B cell (primary cell): ENCODE measurements at regions of chr7 and their contacts with region 1.

Region 1: GRCh38 chr7:3955751-3956696 is 655.0 kb downstream of the SDK1 start:
- DNase-seq: peak; percentile 61
- ATAC-seq: peak; percentile 89
- H3K4me3 ChIP-seq: no peak overlapping the region
- H3K4me3 Mint-ChIP-seq: peak overlapping the region; percentile 65
- H3K27ac ChIP-seq: no peak overlapping the region
- H3K27ac Mint-ChIP-seq: peak overlapping the region; percentile 44
- H3K4me1 ChIP-seq: peaks cover 4 to 38% of the 10 kb centered on the region in 2 donors
- H3K4me1 Mint-ChIP-seq: peaks cover 33% of the 10 kb centered on the region
- H3K27me3 ChIP-seq: peaks cover 0 to 3% (median 0%) of the 10 kb centered on the region in 4 experiments
- H3K27me3 Mint-ChIP-seq: peaks cover 14% of the 10 kb centered on the region
- CTCF ChIP-seq: no peak

Region 2: DNA sequence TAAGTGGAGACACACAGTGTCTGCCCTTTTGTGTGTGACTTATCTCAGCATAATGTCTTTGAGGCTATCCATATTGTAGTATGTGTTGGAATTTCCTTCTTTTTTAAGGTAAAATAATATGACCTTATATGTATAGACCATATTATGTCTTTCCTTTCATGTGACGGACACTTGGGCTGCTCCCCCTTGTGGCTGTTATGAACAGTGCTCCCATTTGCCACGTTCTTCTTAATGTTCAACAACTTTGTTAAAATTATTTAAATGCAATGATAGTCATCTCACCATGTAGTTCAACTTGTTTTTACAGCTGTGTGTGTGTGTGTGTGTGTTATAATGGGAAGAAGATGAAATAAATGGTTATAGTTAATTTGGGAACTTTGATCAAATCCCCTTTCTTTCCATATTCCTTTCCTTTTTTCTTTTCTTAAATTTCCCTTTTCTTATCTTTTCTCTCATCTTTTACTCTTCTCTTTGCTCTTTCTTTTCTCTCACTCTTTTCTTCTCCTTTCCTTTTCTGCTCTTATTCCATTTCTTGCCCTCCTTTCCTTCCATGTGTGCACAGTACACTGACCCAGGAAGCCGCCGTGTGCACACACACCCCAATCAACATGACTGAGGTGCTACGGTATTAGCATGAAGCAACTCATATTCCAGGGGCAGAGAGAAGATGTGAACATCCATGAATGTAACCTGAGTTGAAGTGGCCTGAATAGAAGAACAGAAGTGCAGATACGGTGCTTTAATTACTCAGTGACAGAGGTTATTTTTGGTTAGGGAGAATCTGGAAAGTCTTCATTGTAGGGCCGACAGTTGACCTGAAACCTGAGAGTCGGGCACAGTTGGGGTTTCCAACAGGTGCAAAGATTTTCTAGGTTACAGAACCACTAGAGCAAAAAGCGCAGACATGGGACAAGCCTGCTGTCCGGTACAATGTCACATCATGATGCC is 58.3 kb before region 1 on chr7:
- CTCF ChIA-PET with region 1: no interaction called
- POLR2A ChIA-PET with region 1: no interaction called
- intact Hi-C with region 1: loop called (anchors 5 kb)
- DNase-seq: peak; percentile 71
- ATAC-seq: peak; percentile 62
- H3K4me3 ChIP-seq: no peak overlapping the region
- H3K4me3 Mint-ChIP-seq: no peak overlapping the region
- H3K27ac ChIP-seq: no peak overlapping the region
- H3K27ac Mint-ChIP-seq: no peak overlapping the region
- H3K4me1 ChIP-seq: no peaks in the 10 kb centered on the region
- H3K4me1 Mint-ChIP-seq: no peaks in the 10 kb centered on the region
- H3K27me3 ChIP-seq: peaks cover 0 to 3% (median 1%) of the 10 kb centered on the region in 4 experiments
- H3K27me3 Mint-ChIP-seq: peaks cover 20% of the 10 kb centered on the region
- CTCF ChIP-seq: peak; percentile 91

Region 3: GRCh38 chr7:4566714-4567113 is 610.7 kb after region 1 on chr7:
- CTCF ChIA-PET with region 1: no interaction called
- POLR2A ChIA-PET with region 1: no interaction called
- intact Hi-C with region 1: no loop called
- DNase-seq: no peak
- ATAC-seq: no peak
- H3K4me3 ChIP-seq: no peak overlapping the region
- H3K4me3 Mint-ChIP-seq: no peak overlapping the region
- H3K27ac ChIP-seq: no peak overlapping the region
- H3K27ac Mint-ChIP-seq: no peak overlapping the region
- H3K4me1 ChIP-seq: no peaks in the 10 kb centered on the region
- H3K4me1 Mint-ChIP-seq: no peaks in the 10 kb centered on the region
- H3K27me3 ChIP-seq: peaks cover 0 to 4% (median 0%) of the 10 kb centered on the region in 4 experiments
- H3K27me3 Mint-ChIP-seq: peaks cover 5% of the 10 kb centered on the region
- CTCF ChIP-seq: no peak